ENCODE measurements at regions of chr4 and their contacts with region 1.

Region 1: DNA sequence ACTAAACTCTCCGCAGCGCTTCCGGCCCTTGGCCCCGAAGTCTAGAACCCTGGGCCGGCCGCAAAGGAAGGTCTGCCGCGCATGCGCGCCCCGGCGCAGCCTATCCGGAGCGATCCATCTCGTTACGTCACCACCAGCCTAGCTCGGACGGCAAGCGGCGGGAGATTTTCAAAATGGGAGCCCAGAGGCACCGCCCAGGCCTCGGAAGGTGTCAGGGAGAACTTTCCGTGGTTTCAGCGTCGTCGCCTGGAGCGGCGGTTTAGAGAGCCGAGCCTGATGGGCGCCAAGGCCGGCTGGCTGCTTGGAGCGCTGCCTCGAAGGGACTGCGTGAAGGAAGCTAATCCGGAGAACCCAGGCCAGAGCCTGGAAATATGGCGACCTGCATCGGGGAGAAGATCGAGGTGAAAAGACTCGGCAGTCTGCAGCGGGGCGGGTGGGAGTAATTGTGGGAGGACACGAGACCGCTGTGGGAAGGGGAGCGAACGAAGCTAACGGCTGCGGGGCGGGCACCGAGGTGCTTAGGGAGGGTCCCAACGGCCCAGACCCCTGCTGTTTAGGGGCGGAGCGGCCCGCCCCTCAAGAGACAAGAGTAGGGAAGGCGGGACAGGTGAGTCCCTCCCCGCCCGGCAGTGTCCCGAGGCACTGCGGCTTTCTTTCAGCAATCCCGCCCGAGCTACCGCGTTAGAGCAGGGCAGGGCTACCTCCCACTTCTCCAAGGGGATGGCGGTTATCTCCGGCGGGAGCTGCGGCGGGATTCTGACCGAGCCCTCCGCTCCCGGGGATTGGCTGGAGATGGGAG is at the start of gene PLK4:
- DNase-seq: peak; percentile 95

Region 2: GRCh38 chr4:127782274-127783025 is 98.5 kb before region 1 on chr4 and contains the start of gene HSPA4L:
- CTCF ChIA-PET with region 1: no interaction called
- POLR2A ChIA-PET with region 1: interaction called, 14 read pairs
- DNase-seq: peak; percentile 63

Region 3: DNA sequence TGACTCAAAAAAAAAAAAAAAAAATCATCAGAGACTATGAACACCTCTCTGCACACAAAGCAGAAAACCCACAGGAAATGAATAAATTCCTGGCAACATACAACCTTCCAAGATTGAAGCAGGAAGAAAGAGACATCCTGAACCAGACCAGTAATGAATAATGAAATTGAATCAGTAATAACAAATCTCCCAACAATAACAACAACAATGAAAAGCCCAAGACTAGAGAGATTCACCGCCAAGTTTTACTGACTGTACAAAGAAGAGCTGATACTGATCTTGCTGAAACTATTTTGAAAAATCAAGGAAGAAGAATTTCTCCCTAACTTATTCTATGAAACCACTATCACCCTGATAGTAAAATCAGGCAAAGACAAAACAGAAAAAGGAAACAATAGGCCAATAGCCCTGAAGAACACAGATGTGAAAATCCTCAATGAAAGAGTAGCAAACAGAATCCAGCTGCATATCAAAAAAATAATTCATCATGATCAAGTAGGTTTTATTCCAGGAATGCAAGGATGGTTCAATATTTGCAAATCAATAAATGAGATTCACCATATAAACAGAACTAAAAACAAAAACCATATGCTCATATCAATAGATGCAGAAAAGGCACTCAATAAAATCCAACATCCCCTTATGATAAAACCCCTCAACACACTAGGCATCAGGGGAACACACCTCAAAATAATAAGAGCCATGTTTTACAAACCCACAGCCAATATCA is 31.3 kb before region 1 on chr4:
- CTCF ChIA-PET with region 1: no interaction called
- POLR2A ChIA-PET with region 1: no interaction called
- DNase-seq: no peak

Region 4: DNA sequence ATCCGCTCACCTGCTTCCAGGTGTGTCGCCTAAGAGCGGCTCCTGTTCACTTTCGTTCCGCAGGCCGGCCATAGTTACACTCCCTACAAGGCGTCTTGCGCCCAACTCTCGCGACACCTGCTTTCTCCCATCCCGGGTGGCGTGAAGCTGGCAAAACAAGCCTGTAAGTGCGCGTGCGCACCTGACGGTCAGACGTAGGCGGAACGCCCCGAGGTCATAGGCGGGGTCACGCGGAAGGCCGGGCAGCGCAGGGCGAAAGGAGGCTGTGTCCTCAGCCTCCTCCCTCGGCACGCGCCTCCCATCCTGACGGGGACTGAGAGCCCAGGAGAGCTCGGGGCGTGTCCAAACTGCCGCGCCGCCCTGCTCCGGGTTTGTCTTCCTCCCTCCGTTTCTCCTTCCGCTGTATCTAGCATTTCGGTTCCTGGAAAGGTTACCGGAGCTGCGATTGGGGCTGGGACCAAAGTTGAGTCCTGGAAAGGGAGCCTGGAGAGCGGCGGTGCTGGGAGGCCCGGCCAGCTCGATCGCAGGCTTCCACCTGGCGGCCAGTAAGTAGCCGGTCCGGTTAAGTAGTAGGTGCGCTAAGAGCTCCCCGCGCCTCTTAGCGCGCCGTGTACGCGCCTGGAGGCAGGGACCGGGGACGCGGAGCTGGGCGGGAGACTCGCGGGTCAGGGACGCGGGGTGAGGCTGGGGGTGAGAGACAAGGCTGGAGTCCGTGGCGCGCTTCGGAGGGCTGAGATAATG is 84.3 kb after region 1 on chr4 and contains the starts of genes ABHD18 and MFSD8:
- CTCF ChIA-PET with region 1: no interaction called
- POLR2A ChIA-PET with region 1: interaction called, 21 read pairs
- DNase-seq: peak; percentile 94

Region 5: GRCh38 chr4:128060699-128061565 is 180.0 kb after region 1 on chr4 and contains the start of gene LARP1B:
- CTCF ChIA-PET with region 1: interaction called, 3 read pairs
- POLR2A ChIA-PET with region 1: interaction called, 17 read pairs
- DNase-seq: peak; percentile 93

Measured in HEK293T (cell line).